ENCODE measurements at regions of chr3 and their contacts with region 1.

Region 1: GRCh38 chr3:67113802-67114407 is 115.8 kb downstream of the KBTBD8 start:
- DNase-seq: peak; percentile 25 to 70
- ATAC-seq: peak; percentile 90 to 93
- H3K4me3 ChIP-seq: no peak overlapping the region
- H3K27ac ChIP-seq: no peak overlapping the region
- H3K4me1 ChIP-seq: no peaks in the 10 kb centered on the region
- CTCF ChIP-seq: peak; percentile 72
- EP300 ChIP-seq: no peak
- POLR2A ChIP-seq: no peak
- RAD21 ChIP-seq: peak; percentile 77 to 79

Region 2: GRCh38 chr3:67094774-67095173 is 19.1 kb before region 1 on chr3:
- CTCF ChIA-PET with region 1: interaction called, 19 read pairs
- POLR2A ChIA-PET with region 1: no interaction called
- DNase-seq: no peak
- ATAC-seq: no peak
- H3K4me3 ChIP-seq: no peak overlapping the region
- H3K27ac ChIP-seq: no peak overlapping the region
- H3K4me1 ChIP-seq: no peaks in the 10 kb centered on the region
- CTCF ChIP-seq: no peak
- EP300 ChIP-seq: no peak
- POLR2A ChIP-seq: no peak
- RAD21 ChIP-seq: no peak

Region 3: DNA sequence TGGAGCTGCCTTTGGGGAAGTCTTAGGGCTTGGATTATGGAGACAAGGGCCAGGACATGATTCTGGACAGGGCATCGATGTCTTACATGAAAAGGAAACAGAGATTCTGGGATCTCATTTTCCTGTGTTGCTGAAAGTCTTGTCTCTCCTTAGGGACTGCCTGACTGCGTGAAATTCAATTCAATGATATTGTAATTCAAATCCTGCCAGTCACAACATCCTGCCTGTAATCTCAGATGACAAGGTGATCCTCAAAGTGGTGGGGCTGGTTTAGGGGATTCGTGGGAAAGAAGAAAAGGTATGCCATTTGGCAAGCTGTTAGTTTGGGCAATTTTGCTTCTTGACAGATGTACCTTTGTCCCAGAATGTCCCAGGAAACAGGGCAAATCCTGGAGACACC is 13.3 kb after region 1 on chr3:
- CTCF ChIA-PET with region 1: interaction called, 15 read pairs
- POLR2A ChIA-PET with region 1: no interaction called
- DNase-seq: no peak
- ATAC-seq: no peak
- H3K4me3 ChIP-seq: no peak overlapping the region
- H3K27ac ChIP-seq: no peak overlapping the region
- H3K4me1 ChIP-seq: no peaks in the 10 kb centered on the region
- CTCF ChIP-seq: no peak
- EP300 ChIP-seq: no peak
- POLR2A ChIP-seq: no peak
- RAD21 ChIP-seq: no peak

Region 4: DNA sequence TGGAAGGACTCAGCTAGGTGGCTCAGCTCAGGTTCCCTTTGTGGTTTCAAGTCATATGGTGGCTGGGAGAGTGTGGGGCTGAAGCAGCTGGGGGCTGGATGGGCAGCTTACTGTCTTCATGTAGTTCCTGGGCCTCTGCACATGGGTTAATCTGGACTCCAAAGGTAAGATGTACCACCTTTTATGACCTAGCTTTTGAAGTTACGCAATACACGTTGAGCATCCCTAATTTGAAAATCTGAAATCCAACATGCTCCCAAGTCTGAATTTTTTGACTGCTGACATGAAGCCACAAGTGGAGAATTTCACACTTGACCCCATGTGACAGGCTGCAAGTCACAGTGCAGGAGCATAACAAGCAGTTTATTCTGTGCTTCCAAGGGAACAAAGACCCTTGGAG is 57.9 kb after region 1 on chr3:
- CTCF ChIA-PET with region 1: no interaction called
- POLR2A ChIA-PET with region 1: no interaction called
- DNase-seq: no peak
- ATAC-seq: no peak
- H3K4me3 ChIP-seq: no peak overlapping the region
- H3K27ac ChIP-seq: no peak overlapping the region
- H3K4me1 ChIP-seq: no peaks in the 10 kb centered on the region
- CTCF ChIP-seq: no peak
- EP300 ChIP-seq: no peak
- POLR2A ChIP-seq: no peak
- RAD21 ChIP-seq: no peak

Region 5: DNA sequence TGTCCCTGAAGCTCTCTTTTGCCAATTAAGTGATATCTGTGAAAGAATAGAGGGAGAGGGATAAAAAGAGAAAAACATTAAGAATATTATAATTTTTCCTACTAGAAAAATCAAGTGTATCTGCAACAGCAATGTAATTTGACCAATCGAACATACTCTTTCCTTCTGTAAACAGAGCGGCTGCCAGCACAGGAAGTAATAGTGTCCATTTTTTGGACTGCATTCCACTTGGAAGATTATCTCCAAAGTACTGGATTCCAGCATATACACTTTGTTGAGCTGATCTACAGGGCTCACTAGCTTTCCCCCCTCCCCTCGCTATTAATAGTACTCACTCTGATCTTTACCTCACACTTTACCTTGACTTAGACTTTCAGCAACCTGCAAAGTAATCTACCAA is 450.1 kb after region 1 on chr3:
- CTCF ChIA-PET with region 1: no interaction called
- POLR2A ChIA-PET with region 1: no interaction called
- DNase-seq: no peak
- ATAC-seq: no peak
- H3K4me3 ChIP-seq: no peak overlapping the region
- H3K27ac ChIP-seq: no peak overlapping the region
- H3K4me1 ChIP-seq: peaks cover 16% of the 10 kb centered on the region; the same call in 2 of the 3 replicates
- CTCF ChIP-seq: no peak
- EP300 ChIP-seq: no peak
- POLR2A ChIP-seq: no peak
- RAD21 ChIP-seq: no peak

Region 6: DNA sequence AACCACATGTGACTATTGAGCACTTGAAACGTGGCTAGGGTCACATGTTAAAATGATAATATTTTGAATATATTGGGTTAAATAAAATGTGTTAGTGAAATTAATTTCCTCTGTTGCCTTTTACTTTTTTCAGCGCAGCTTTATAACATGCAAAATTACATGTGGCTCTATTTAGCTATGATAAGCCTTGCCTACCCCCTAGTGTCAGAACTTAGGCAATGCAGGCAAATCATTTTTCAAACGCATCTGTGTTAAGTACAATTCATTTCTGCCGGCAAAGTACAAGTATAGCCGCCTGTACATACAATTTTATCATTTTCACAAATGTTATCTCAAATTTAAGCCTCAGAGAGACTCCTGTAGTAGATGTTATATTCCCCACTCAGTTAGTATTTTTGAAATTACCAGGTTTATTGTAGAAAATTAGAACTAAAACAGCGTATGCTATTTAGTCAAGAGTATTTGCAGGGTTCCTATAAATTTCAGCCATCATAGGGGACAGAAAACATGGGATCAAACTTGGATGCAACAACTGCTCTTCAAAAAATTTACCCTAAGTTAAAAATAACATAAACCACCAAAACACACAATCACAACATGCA is 1762.3 kb after region 1 on chr3:
- CTCF ChIA-PET with region 1: interaction called, 34 read pairs
- POLR2A ChIA-PET with region 1: no interaction called
- DNase-seq: peak; percentile 3 to 66
- ATAC-seq: peak in 1 of 2 experiments; percentile 81; a peak in 3 of 6 replicates
- H3K4me3 ChIP-seq: no peak overlapping the region
- H3K27ac ChIP-seq: no peak overlapping the region
- H3K4me1 ChIP-seq: no peaks in the 10 kb centered on the region
- CTCF ChIP-seq: peak; percentile 72
- EP300 ChIP-seq: no peak
- POLR2A ChIP-seq: no peak
- RAD21 ChIP-seq: peak; percentile 78 to 86